ENCODE measurements at regions of chr19 and their contacts with region 1.

Region 1: GRCh38 chr19:16584248-16585141 is 12.3 kb upstream of the SLC35E1 start:
- DNase-seq: peak; percentile 98
- ATAC-seq: peak; percentile 55
- H3K4me3 ChIP-seq: peak overlapping the region; percentile 79
- H3K27ac ChIP-seq: peak overlapping the region; percentile 99
- H3K4me1 ChIP-seq: peaks cover 52% of the 10 kb centered on the region
- H3K27me3 ChIP-seq: no peaks in the 10 kb centered on the region
- CTCF ChIP-seq: no peak
- EP300 ChIP-seq: peak; percentile 86 to 93
- POLR2A ChIP-seq: peak; percentile 94
- RAD21 ChIP-seq: no peak; the same call in 1 of the 2 replicates

Region 2: DNA sequence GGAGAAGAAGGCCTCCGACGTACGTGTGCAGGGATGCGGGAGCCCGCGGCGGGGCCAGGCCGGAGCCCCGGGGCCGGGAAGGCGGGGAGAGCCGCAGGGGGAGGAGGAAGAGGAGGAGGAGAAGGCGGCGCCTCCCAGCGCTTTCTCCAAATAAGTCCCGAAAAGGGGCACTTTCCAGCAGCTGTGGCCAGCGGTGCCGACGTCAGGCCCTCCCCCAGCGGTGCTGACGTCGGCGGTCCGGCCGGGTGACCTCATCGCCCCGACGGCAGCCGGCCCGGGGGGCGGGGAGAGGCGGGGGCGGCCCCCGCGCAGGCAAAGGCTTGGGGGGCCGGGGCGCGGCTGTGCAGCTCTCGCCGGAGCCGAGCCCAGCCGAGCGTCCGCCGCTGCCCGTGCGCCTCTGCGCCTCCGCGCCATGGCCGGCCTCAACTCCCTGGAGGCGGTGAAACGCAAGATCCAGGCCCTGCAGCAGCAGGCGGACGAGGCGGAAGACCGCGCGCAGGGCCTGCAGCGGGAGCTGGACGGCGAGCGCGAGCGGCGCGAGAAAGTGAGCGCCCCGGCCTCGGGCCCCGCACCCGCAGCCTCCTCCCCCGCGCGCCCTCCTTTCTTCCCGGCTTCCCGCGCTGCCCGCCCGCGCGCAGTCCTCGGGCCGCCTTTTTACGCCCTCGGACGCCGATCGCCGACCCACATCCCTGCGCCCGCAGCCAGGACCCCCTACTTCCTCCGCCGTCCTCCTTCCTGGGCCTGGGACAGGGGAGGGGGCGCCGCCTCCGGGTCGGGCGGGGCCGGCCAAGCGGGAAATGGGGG is 508.1 kb before region 1 on chr19 and contains the start of gene TPM4:
- CTCF ChIA-PET with region 1: no interaction called
- POLR2A ChIA-PET with region 1: no interaction called
- RAD21 ChIA-PET with region 1: no interaction called
- SMC1A ChIA-PET with region 1: no interaction called
- in situ Hi-C with region 1: no loop called
- intact Hi-C with region 1: loop called (anchors 5 kb)
- DNase-seq: peak; percentile 74
- ATAC-seq: peak; percentile 66
- H3K4me3 ChIP-seq: peak within 1 kb of the TSS; percentile 92
- H3K27ac ChIP-seq: peak within 1 kb of the TSS; percentile 99
- H3K4me1 ChIP-seq: peaks cover 17% of the 10 kb centered on the region
- H3K27me3 ChIP-seq: no peaks in the 10 kb centered on the region
- CTCF ChIP-seq: no peak
- EP300 ChIP-seq: peak in 1 of 2 experiments; percentile 26; a peak in 2 of 4 replicates
- POLR2A ChIP-seq: peak; percentile 92
- RAD21 ChIP-seq: no peak
- polyA plus RNA-seq, gene TPM4: 183 to 194 TPM

Region 3: GRCh38 chr19:16446724-16447368 is 137.6 kb before region 1 on chr19:
- CTCF ChIA-PET with region 1: interaction called, 6 read pairs
- POLR2A ChIA-PET with region 1: interaction called, 11 read pairs
- RAD21 ChIA-PET with region 1: interaction called, 4 read pairs
- SMC1A ChIA-PET with region 1: interaction called, 9 read pairs
- in situ Hi-C with region 1: no loop called
- intact Hi-C with region 1: loop called (anchors 2 kb)
- DNase-seq: peak; percentile 70
- ATAC-seq: peak; percentile 71
- H3K4me3 ChIP-seq: peak overlapping the region; percentile 12; the same call in 1 of the 2 replicates
- H3K27ac ChIP-seq: peak overlapping the region; percentile 99
- H3K4me1 ChIP-seq: peaks cover 86% of the 10 kb centered on the region
- H3K27me3 ChIP-seq: no peaks in the 10 kb centered on the region
- CTCF ChIP-seq: no peak
- EP300 ChIP-seq: peak in 1 of 2 experiments; percentile 83; a peak in 2 of 4 replicates
- POLR2A ChIP-seq: peak; percentile 53
- RAD21 ChIP-seq: no peak

Region 4: DNA sequence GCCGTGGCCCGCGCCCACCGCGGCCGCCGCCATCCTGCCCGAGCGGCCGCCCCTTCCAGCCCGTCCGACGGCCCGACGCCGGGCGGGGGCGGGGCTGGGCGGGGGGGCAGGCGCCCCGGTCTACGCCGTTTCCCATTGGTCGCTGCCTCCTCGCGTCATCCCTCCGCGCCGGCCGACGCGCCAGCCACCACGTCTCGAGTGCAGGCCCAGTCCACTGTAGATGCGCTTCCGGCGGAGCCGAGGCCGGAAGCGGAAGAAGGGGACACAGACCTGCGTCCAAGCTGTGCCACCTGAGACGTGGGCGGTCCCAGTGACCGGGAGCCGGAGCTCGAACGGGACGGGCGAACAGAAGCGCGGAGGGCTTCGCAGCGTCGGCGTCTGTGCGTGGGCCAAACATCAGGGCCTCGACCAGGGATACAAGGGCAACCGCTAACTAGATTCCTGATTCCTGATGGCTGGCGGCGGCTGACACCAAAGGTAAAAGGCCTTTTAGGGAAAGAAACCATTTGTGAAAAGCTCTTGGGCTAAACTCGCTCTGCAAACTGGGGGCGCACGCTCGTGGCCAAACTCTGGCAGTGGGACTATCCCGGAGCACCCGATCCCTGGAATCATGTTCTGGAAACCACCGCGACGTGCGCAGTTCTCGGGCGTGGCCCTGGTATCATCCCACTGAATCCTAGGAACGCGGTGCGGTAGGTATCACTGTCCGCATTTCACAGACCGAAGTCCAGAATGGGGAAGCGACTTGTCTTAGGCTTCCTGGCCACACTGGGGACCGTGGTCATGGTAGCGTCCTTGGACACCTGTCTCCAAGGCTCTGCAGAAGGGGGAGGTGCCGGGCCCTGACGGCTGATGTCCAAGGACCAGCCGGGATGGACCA is 11.9 kb before region 1 on chr19 and contains the start of gene SLC35E1:
- CTCF ChIA-PET with region 1: interaction called, 15 read pairs
- POLR2A ChIA-PET with region 1: interaction called, 93 read pairs
- RAD21 ChIA-PET with region 1: interaction called, 28 read pairs
- SMC1A ChIA-PET with region 1: interaction called, 20 read pairs
- in situ Hi-C with region 1: no loop called
- intact Hi-C with region 1: no loop called
- DNase-seq: peak; percentile 86
- ATAC-seq: peak; percentile 97
- H3K4me3 ChIP-seq: peak within 1 kb of the TSS; percentile 97
- H3K27ac ChIP-seq: peak within 1 kb of the TSS; percentile 87
- H3K4me1 ChIP-seq: peaks cover 12% of the 10 kb centered on the region
- H3K27me3 ChIP-seq: no peaks in the 10 kb centered on the region
- CTCF ChIP-seq: no peak
- EP300 ChIP-seq: no peak
- POLR2A ChIP-seq: peak; percentile 94
- RAD21 ChIP-seq: no peak
- polyA plus RNA-seq, gene SLC35E1: 11.3 to 15.1 TPM

Region 5: DNA sequence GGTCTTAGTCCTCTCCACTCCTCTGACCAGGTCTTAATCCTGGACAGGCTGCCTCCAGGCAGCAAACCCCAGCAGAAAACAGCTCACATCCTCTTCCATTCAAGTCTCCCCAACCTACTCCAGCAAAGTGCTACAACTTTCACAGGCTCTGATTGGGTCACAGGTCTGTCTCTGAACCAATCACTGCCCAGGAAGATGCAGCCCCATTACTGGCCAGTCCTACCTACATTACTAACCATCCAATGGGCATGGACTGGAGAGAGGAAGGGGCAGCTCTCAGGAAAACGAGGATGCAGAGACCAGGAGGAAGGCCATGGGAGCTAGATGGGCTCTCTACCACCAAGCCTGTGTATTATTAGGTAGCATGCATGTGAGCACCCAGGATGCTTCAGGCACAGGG is 31.3 kb after region 1 on chr19:
- CTCF ChIA-PET with region 1: interaction called, 7 read pairs
- POLR2A ChIA-PET with region 1: interaction called, 19 read pairs
- RAD21 ChIA-PET with region 1: interaction called, 17 read pairs
- SMC1A ChIA-PET with region 1: interaction called, 9 read pairs
- in situ Hi-C with region 1: no loop called
- intact Hi-C with region 1: no loop called
- DNase-seq: no peak
- ATAC-seq: peak; percentile 42
- H3K4me3 ChIP-seq: no peak overlapping the region
- H3K27ac ChIP-seq: no peak overlapping the region
- H3K4me1 ChIP-seq: peaks cover 42% of the 10 kb centered on the region
- H3K27me3 ChIP-seq: no peaks in the 10 kb centered on the region
- CTCF ChIP-seq: no peak
- EP300 ChIP-seq: no peak
- POLR2A ChIP-seq: no peak
- RAD21 ChIP-seq: no peak

Region 6: DNA sequence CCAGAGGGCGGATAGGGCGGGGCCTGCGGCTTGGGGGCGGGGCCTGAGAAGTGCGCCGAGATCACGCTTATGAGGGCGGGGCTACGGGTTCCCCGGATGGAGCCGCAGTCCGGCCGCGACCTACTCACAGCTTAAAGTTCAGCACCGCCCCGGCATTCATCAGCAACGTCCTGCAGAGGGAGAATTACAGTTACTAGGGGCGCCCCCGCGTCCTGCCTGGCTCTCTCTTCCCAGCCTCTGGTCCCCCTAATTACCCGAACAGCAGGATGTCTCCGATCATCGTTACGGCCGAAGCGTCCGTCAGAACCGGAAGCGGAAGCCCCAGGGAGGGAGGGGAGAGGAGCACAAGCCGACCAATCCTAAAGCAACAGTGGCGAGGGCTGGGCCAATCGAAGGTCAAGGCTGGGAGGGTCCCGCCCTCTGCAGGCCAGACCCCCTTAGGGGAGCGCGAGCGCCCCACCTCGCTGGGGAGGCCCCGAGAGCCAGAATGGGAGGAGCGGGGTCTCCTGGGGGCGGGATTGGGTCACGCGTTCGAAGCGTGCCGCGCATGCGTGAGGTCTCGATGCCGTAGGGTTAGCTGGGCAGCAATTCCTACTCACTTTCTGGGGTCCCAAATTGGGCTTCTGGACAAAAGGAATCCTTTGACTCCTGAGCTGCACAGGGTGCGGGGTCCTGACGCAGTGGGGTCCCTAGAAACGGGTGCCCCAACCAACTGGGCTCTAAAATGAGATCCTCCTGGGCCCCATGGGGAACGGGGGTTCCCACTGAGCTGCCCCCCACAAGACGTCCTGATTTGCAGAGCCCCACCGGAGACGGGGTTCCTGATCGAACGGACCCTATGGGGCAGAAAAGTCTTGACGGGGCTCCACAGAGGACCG is 75.6 kb after region 1 on chr19 and contains the start of gene SMIM7:
- CTCF ChIA-PET with region 1: interaction called, 3 read pairs
- POLR2A ChIA-PET with region 1: interaction called, 64 read pairs
- RAD21 ChIA-PET with region 1: interaction called, 22 read pairs
- SMC1A ChIA-PET with region 1: interaction called, 21 read pairs
- in situ Hi-C with region 1: no loop called
- intact Hi-C with region 1: loop called (anchors 2 kb)
- DNase-seq: peak; percentile 98
- ATAC-seq: peak; percentile 97
- H3K4me3 ChIP-seq: peak within 1 kb of the TSS; percentile 99
- H3K27ac ChIP-seq: peak within 1 kb of the TSS; percentile 94
- H3K4me1 ChIP-seq: peaks cover 18% of the 10 kb centered on the region
- H3K27me3 ChIP-seq: no peaks in the 10 kb centered on the region
- CTCF ChIP-seq: peak in 1 of 3 experiments; percentile 47; a peak in 2 of 6 replicates
- EP300 ChIP-seq: no peak
- POLR2A ChIP-seq: peak; percentile 91
- RAD21 ChIP-seq: no peak
- polyA plus RNA-seq, gene SMIM7: 157 to 170 TPM

Region 7: DNA sequence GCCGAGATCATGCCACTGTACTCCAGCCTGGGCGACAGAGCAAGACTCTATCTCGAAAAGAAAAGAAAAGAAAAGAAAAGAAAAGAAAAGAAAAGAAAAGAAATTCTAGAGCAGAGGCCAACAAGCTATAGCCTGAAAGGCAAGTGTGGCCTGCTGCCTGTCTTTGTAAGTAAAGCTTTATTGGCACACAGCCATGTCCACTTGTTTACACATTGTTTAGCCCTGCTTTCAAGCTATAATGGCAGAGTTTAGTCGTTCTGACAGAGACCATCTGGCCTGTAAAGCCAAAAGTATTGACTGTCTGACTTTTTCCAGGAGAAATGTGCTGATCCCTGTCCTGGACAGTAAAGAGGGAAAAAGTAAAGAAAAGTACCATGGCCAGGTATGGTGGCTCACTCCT is 153.4 kb after region 1 on chr19:
- CTCF ChIA-PET with region 1: no interaction called
- POLR2A ChIA-PET with region 1: no interaction called
- RAD21 ChIA-PET with region 1: no interaction called
- SMC1A ChIA-PET with region 1: no interaction called
- in situ Hi-C with region 1: no loop called
- intact Hi-C with region 1: no loop called
- DNase-seq: no peak
- ATAC-seq: no peak
- H3K4me3 ChIP-seq: no peak overlapping the region
- H3K27ac ChIP-seq: no peak overlapping the region
- H3K4me1 ChIP-seq: no peaks in the 10 kb centered on the region
- H3K27me3 ChIP-seq: no peaks in the 10 kb centered on the region
- CTCF ChIP-seq: no peak
- EP300 ChIP-seq: no peak
- POLR2A ChIP-seq: no peak
- RAD21 ChIP-seq: no peak